CD8-positive, alpha-beta T cell (primary cell): ENCODE measurements at regions of chr9 and their contacts with region 1.

Region 1: DNA sequence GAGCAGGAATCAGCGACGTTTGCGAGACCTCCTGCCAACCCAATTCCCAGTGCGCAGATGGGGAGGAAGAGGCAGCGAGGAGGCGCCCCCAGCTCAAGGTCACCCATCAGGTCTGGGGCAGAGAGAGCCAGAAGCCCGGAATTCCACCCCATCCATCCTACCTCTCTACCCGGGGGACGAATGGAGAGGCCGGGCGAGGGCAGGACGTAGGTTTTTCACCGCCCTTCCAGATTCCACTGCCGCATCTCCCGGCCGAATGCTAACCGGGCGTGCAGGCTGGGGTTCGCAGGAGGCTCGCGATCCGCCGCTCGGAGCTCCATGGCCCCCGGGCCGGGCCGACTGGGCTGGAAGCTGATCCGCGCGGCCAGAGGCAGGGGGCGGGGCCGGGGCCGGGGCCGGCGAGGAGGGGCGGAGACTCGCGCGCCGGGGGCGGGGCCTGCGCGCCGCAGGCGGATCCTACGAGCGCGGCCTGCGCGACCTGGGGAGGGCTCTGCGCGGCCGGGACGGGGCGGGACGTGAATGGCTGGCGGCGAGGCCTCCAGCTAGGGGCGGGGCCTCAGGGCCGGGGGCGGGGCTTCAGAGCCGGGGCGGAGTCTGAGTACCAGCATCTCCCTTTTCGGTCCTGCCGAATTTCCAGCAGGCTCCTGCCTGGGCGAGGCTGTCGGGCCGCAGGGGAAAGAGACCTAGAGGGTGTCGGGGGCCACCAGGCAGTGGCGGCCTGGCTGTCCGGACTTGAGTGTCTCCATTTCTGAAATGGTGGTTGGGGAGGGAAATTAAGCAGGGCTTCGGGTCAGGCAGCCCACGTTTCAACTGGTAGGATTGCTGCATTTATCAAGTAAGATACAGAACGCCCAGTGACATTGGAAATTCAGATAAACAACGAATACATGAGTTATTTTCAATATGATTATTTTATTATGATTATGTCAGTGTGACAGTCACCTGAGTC is at the start of gene ST6GALNAC4:
- DNase-seq: peak; percentile 90 to 98 (median 95)
- ATAC-seq: peak; percentile 94
- H3K4me3 ChIP-seq: peak within 1 kb of the TSS; percentile 70 to 89
- H3K4me3 Mint-ChIP-seq: peak within 1 kb of the TSS; percentile 89
- H3K27ac ChIP-seq: peak within 1 kb of the TSS; percentile 62 to 72
- H3K27ac Mint-ChIP-seq: peak within 1 kb of the TSS; percentile 92
- H3K4me1 ChIP-seq: peaks cover 46% of the 10 kb centered on the region
- H3K4me1 Mint-ChIP-seq: peaks cover 54% of the 10 kb centered on the region
- H3K27me3 ChIP-seq: peaks cover 0 to 3% of the 10 kb centered on the region in 2 experiments
- H3K27me3 Mint-ChIP-seq: no peaks in the 10 kb centered on the region
- CTCF ChIP-seq: no peak
- total RNA-seq, gene ST6GALNAC4: 40.0 to 47.6 TPM

Region 2: DNA sequence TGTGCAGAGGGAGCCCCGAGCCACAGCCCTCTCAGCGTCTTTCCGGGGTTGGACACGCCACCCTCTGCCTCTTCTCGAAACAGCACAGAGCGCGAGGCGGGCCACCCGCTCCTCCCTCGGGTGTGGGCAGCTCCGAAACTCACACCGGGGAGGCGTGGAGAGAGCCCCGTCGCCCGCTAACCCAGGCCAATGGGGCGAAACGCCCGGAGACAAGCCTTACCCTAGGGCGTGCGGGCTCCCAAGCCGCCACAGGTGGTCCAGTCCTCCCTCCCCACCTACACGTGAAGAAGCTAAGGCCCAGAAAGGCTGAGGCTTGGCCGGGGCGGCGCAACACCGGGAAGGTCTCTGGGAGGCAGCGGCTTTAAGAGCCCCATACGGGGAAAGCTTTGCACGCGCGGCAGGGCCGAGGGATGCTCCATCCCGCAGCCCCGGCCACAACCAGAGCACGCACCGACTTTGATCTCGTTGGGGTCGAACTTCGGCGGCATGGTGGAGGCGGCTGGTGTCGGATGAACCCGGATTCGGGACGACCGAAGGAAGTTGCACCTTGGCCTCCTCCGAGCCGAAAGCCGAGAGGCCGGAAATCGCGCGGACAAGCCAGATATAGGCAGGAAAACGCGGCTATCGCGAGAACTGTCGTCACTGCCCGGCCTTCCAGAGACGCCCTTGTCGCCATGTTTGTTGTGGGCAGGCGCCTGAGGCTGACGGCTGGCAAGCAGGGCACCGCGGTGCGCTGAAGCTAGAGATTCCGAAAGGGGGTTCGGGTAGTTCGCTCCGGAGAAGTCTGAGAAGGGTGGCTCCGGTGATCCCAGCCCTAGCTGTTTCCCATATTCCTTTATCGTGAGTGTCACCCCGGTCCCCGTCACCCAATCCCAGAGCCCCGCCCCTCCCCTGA is 465.9 kb before region 1 on chr9 and contains the starts of genes LRSAM1 and RPL12:
- CTCF ChIA-PET with region 1: no interaction called
- POLR2A ChIA-PET with region 1: no interaction called
- intact Hi-C with region 1: loop called in 1 of 2 experiments (anchors 5 kb)
- DNase-seq: peak; percentile 97 to 100 (median 99)
- ATAC-seq: peak; percentile 82
- H3K4me3 ChIP-seq: peak within 1 kb of the TSS; percentile 90 to 94
- H3K4me3 Mint-ChIP-seq: peak within 1 kb of the TSS; percentile 96
- H3K27ac ChIP-seq: peak within 1 kb of the TSS; percentile 85
- H3K27ac Mint-ChIP-seq: peak within 1 kb of the TSS; percentile 96
- H3K4me1 ChIP-seq: peaks cover 31% of the 10 kb centered on the region
- H3K4me1 Mint-ChIP-seq: peaks cover 44% of the 10 kb centered on the region
- H3K27me3 ChIP-seq: no peaks in the 10 kb centered on the region
- H3K27me3 Mint-ChIP-seq: no peaks in the 10 kb centered on the region
- CTCF ChIP-seq: peak; percentile 21
- total RNA-seq, gene LRSAM1: 11.7 to 14.0 TPM
- total RNA-seq, gene RPL12: 1,908 to 1,959 TPM

Region 3: GRCh38 chr9:127611899-127612790 is 304.8 kb before region 1 on chr9 and contains the start of gene STXBP1:
- CTCF ChIA-PET with region 1: no interaction called
- POLR2A ChIA-PET with region 1: no interaction called
- intact Hi-C with region 1: loop called in 1 of 2 experiments (anchors 2 kb)
- DNase-seq: peak; percentile 70 to 92 (median 83)
- ATAC-seq: peak; percentile 80
- H3K4me3 ChIP-seq: peak within 1 kb of the TSS; percentile 59 to 82
- H3K4me3 Mint-ChIP-seq: peak within 1 kb of the TSS; percentile 93
- H3K27ac ChIP-seq: peak within 1 kb of the TSS in 1 of 2 experiments; percentile 42
- H3K27ac Mint-ChIP-seq: peak within 1 kb of the TSS; percentile 92
- H3K4me1 ChIP-seq: peaks cover 32% of the 10 kb centered on the region
- H3K4me1 Mint-ChIP-seq: peaks cover 36% of the 10 kb centered on the region
- H3K27me3 ChIP-seq: peaks cover 4 to 9% of the 10 kb centered on the region in 2 experiments
- H3K27me3 Mint-ChIP-seq: peaks cover 9% of the 10 kb centered on the region
- CTCF ChIP-seq: no peak
- total RNA-seq, gene STXBP1: 7.7 to 8.9 TPM

Region 4: DNA sequence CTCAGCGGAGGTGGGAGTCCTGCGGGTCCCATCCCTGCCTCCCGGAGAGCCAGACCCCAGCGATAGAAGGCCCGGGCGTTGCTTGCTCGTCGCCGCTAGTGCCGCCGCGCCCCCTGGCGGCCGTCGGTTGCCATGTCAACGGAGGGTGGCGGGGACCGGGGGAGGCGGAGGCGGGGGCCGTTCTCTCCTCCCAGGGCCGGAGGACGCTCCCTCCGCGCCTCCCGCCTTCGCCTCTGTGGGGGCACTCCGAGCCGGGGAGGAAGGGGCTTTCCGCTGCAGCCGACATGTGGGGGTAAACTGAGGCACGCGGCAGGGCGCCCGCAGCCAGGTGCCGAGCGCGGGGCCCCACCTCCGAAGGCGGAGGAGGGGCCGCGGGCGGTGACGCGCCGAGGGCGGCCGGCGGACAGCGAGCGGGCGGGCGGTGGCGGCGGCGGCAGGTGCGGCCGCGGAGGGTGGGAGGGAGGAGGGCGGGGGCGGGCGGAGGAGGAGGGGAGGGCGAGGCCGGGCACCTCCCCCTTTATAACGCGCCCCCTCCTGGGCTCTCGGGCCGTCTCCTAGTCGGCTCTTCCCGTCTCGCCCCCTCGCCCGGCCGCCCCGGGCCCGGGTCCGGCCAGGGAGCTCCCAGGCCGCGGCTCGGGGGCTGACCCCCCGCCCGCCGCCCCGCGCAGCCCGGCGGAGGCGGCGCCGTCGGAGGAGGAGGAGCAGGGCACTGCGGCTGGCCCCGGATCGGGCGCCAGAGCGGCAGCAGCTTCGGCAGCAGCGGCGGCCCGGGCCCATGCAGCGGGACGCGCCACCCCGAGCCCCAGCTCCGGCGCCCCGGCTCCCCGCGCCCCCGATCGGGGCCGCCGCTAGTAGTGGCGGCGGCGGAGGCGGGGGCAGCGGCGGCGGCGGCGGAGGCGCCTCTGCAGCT is 131.7 kb before region 1 on chr9:
- CTCF ChIA-PET with region 1: interaction called, 29 read pairs
- POLR2A ChIA-PET with region 1: interaction called, 7 read pairs
- intact Hi-C with region 1: loop called (anchors 1 kb)
- DNase-seq: peak; percentile 85 to 97 (median 91)
- ATAC-seq: peak; percentile 53
- H3K4me3 ChIP-seq: peak overlapping the region; percentile 49 to 82
- H3K4me3 Mint-ChIP-seq: peak overlapping the region; percentile 89
- H3K27ac ChIP-seq: peak overlapping the region; percentile 73 to 94
- H3K27ac Mint-ChIP-seq: peak overlapping the region; percentile 96
- H3K4me1 ChIP-seq: peaks cover 66% of the 10 kb centered on the region
- H3K4me1 Mint-ChIP-seq: peaks cover 60% of the 10 kb centered on the region
- H3K27me3 ChIP-seq: no peaks in the 10 kb centered on the region
- H3K27me3 Mint-ChIP-seq: no peaks in the 10 kb centered on the region
- CTCF ChIP-seq: peak; percentile 74

Region 5: DNA sequence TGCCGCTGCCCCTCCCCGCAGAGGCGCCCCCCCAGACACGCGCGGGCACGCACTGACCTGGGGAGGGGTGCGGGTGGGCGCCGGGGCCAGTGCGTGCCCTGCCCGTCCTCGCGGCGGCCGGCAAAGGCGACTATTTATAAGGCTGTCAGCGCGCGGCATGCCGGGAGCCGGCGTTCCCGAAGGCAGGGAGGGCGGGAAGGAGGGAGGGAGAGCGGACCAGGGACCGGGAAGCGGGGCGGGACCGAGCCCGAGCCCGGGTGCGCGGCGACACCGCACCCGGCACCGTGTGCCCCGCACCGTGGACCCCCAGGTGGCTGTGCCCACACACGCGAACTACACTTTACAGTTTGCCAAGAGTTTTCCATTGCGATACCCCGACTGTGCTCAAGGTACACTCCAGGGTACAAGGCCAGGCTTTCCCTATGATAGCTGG is 39.4 kb before region 1 on chr9 and contains the start of gene AK1:
- CTCF ChIA-PET with region 1: interaction called, 40 read pairs
- POLR2A ChIA-PET with region 1: interaction called, 3 read pairs
- intact Hi-C with region 1: no loop called
- DNase-seq: no peak
- ATAC-seq: no peak
- H3K4me3 ChIP-seq: no peak within 1 kb of the TSS
- H3K4me3 Mint-ChIP-seq: peak within 1 kb of the TSS; percentile 32
- H3K27ac ChIP-seq: no peak within 1 kb of the TSS
- H3K27ac Mint-ChIP-seq: no peak within 1 kb of the TSS
- H3K4me1 ChIP-seq: peaks cover 10% of the 10 kb centered on the region
- H3K4me1 Mint-ChIP-seq: peaks cover 4% of the 10 kb centered on the region
- H3K27me3 ChIP-seq: no peaks in the 10 kb centered on the region
- H3K27me3 Mint-ChIP-seq: peaks cover 9% of the 10 kb centered on the region
- CTCF ChIP-seq: no peak
- total RNA-seq, gene AK1: 34.8 to 35.2 TPM

Region 6: DNA sequence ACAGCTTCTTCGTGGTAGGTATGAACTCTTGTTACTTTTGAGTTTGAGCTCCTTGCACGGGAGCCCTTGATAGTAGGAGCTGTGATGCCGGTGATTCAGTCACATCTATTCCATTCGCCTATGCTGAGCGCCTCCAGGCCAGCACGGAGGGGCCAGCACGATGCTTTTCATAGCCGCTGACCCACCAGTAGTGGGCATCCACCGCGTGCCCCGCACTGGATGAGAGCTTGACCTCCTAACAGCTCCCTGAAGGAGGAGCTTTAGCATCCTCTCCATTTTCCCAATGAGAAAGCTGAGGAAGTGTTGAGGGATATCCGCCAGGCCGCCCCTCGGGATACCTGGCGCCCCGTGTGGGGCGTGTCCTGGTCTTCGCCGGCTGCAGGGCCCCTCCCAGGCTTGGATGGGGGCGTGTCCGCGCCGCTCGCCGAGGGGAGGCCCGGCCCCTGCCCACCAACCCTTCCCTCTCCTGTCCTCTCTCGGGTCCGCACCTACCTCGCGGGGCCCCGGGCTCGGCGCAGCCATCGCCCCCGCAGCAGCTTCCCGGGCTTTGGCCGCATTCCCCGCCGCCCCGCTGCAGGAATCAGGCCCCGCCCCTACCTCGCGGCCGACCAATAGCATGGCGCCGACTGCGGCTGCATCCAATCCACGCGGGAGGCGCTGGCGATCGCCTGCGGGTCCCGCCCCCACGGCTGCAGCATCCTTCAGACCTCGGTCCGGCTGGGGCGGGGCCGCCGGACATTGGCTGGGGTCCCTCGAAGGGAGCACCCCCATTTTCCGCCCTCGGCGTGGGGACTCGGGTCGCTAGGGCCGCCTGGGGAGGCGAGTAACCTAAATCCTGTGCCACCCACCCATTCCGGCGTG is 13.5 kb after region 1 on chr9 and contains the start of gene PIP5KL1:
- CTCF ChIA-PET with region 1: interaction called, 10 read pairs
- POLR2A ChIA-PET with region 1: interaction called, 7 read pairs
- intact Hi-C with region 1: loop called (anchors 1 kb)
- DNase-seq: peak; percentile 45 to 83 (median 68)
- ATAC-seq: peak; percentile 60
- H3K4me3 ChIP-seq: peak within 1 kb of the TSS; percentile 40 to 53
- H3K4me3 Mint-ChIP-seq: peak within 1 kb of the TSS; percentile 69
- H3K27ac ChIP-seq: no peak within 1 kb of the TSS
- H3K27ac Mint-ChIP-seq: peak within 1 kb of the TSS; percentile 71
- H3K4me1 ChIP-seq: peaks cover 36% of the 10 kb centered on the region
- H3K4me1 Mint-ChIP-seq: peaks cover 35% of the 10 kb centered on the region
- H3K27me3 ChIP-seq: peaks cover 0 to 5% of the 10 kb centered on the region in 2 experiments
- H3K27me3 Mint-ChIP-seq: no peaks in the 10 kb centered on the region
- CTCF ChIP-seq: no peak
- total RNA-seq, gene PIP5KL1: 5.1 to 7.4 TPM

Region 7: DNA sequence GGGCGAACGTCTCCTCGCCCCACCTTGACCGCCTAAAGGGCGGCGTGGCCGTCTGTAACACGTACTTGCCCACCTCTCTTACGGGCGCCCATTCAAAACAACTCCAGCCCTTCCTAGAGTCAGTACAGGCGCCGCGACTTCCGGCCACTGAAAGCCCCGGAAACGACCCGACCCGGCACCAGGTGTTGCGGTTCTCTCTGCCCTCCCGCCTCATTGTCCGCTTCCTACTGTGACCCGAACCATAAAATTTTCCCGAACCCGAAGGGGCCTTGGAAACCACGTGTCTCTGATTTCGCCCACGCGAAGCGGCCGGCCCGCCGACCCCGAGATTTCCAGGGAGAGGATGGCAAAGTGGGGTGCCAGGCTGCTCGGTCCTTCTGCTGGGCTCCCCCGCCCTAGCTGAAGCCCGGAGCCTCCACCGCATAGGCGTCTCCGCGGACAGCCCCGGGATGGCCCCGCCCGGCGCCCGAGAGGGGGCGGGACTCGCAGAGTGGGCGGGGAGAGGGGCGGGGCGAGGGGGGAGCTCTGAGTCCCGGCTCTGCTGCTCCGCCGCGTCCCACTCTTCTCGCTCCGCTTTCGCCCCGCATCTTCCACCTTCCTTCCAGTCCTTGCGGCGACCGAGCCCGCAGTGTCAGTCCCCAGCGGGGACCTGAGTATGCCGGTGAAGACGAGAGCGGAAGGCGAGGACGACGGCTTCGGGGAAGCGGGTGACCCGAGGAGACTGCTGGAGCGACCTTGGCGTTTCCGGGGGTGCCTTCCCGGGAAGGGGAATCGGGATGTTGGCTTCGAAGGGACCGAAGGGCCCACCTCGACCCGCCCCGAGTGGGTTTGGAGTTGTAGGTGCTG is 211.3 kb after region 1 on chr9:
- CTCF ChIA-PET with region 1: no interaction called
- POLR2A ChIA-PET with region 1: no interaction called
- intact Hi-C with region 1: no loop called
- DNase-seq: peak; percentile 69 to 95 (median 83)
- ATAC-seq: peak; percentile 81
- H3K4me3 ChIP-seq: peak overlapping the region; percentile 99 to 100
- H3K4me3 Mint-ChIP-seq: peak overlapping the region; percentile 99
- H3K27ac ChIP-seq: peak overlapping the region; percentile 99
- H3K27ac Mint-ChIP-seq: peak overlapping the region; percentile 99
- H3K4me1 ChIP-seq: peaks cover 31% of the 10 kb centered on the region
- H3K4me1 Mint-ChIP-seq: peaks cover 38% of the 10 kb centered on the region
- H3K27me3 ChIP-seq: no peaks in the 10 kb centered on the region
- H3K27me3 Mint-ChIP-seq: peaks cover 2% of the 10 kb centered on the region
- CTCF ChIP-seq: no peak